ENCODE measurements at regions of chr1 and their contacts with region 1.

Region 1: DNA sequence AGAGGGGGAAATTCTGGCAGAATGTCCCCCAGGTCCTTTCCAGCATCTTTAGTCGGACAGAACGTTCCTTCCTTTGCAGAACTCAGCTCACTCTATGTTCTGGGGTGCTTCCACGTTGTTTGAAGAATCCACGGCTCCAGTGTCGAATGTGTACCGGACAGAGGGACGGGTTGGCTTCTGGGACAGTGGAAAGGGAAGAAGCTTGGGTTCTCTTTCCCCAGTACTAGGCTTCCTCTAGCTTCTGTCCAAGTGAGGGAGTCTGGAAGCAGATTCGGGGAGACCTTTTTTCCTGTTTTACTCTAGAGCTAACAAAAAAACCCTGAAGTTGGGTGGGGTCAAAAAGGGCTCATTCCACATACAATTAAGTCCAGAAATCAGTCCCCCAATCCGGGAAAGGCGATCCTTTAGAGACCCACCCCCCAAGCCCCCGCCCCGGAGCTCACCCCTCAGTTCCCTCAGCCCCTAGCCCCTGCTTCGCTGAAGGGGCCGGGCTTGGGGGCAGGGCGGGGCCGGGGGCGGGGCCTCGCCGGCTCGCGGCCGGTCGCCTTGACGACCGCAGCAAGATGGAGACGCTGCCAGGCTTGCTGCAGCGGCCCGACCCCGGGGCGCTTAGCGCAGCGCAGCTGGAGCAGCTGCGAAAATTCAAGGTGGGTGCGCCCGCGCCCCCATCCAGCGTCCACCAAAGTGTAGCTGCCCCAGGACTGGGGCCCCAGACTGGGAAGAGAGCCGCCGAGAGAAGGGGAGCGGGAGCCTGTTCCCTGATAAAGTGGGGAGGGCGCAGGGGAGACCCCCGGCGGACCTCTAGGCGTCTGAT is at the start of gene RIIAD1:
- DNase-seq: peak; percentile 37
- ATAC-seq: peak; percentile 91
- H3K4me3 Mint-ChIP-seq: peak within 1 kb of the TSS; percentile 57
- H3K27ac Mint-ChIP-seq: no peak within 1 kb of the TSS
- H3K4me1 Mint-ChIP-seq: peaks cover 22% of the 10 kb centered on the region
- H3K27me3 Mint-ChIP-seq: peaks cover 63% of the 10 kb centered on the region
- CTCF ChIP-seq: no peak
- total RNA-seq, gene RIIAD1: not detected

Region 2: GRCh38 chr1:151611832-151612500 is 109.2 kb before region 1 on chr1 and contains the start of gene SNX27:
- CTCF ChIA-PET with region 1: no interaction called
- POLR2A ChIA-PET with region 1: no interaction called
- intact Hi-C with region 1: no loop called
- DNase-seq: peak; percentile 97
- ATAC-seq: peak; percentile 93
- H3K4me3 Mint-ChIP-seq: peak within 1 kb of the TSS; percentile 88
- H3K27ac Mint-ChIP-seq: peak within 1 kb of the TSS; percentile 87
- H3K4me1 Mint-ChIP-seq: peaks cover 42% of the 10 kb centered on the region
- H3K27me3 Mint-ChIP-seq: peaks cover 4% of the 10 kb centered on the region
- CTCF ChIP-seq: no peak
- total RNA-seq, gene SNX27: 27.2 to 29.5 TPM

Region 3: GRCh38 chr1:151661751-151662150 is 59.4 kb before region 1 on chr1:
- CTCF ChIA-PET with region 1: no interaction called
- POLR2A ChIA-PET with region 1: no interaction called
- intact Hi-C with region 1: loop called (anchors 10 kb)
- DNase-seq: no peak
- ATAC-seq: no peak
- H3K4me3 Mint-ChIP-seq: no peak overlapping the region
- H3K27ac Mint-ChIP-seq: peak overlapping the region; percentile 7
- H3K4me1 Mint-ChIP-seq: peaks cover 7% of the 10 kb centered on the region
- H3K27me3 Mint-ChIP-seq: no peaks in the 10 kb centered on the region
- CTCF ChIP-seq: no peak

Region 4: GRCh38 chr1:151689494-151689893 is 31.7 kb before region 1 on chr1:
- CTCF ChIA-PET with region 1: no interaction called
- POLR2A ChIA-PET with region 1: no interaction called
- intact Hi-C with region 1: no loop called
- DNase-seq: no peak
- ATAC-seq: no peak
- H3K4me3 Mint-ChIP-seq: no peak overlapping the region
- H3K27ac Mint-ChIP-seq: no peak overlapping the region
- H3K4me1 Mint-ChIP-seq: no peaks in the 10 kb centered on the region
- H3K27me3 Mint-ChIP-seq: no peaks in the 10 kb centered on the region
- CTCF ChIP-seq: no peak

Region 5: DNA sequence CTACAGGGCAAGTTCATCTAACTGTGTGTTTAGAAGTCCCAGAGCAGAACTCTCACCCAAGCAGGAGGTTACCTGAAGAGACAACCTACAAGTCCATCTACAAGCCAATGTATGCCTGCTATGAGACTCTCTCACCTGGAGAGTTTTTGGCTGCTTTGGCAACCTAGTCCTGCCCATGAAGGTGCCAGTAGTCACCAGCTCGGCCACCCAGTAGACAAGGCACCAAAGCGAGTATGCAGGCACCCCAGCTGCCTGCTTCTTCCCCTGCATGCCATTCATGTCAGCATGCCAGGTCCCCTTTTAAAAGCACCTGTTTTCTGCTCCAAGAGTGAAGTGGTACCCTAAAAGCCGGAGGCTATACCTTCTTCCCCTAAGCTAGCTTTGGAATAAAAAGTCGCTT is 20.3 kb after region 1 on chr1:
- CTCF ChIA-PET with region 1: no interaction called
- POLR2A ChIA-PET with region 1: no interaction called
- intact Hi-C with region 1: no loop called
- DNase-seq: no peak
- ATAC-seq: no peak
- H3K4me3 Mint-ChIP-seq: no peak overlapping the region
- H3K27ac Mint-ChIP-seq: no peak overlapping the region
- H3K4me1 Mint-ChIP-seq: peaks cover 4% of the 10 kb centered on the region
- H3K27me3 Mint-ChIP-seq: peaks cover 5% of the 10 kb centered on the region
- CTCF ChIP-seq: no peak

Measured in activated CD8-positive, alpha-beta T cell treated with anti-CD3 and anti-CD28 coated beads for 36 hours (primary cell).